Astrocyte of the cerebellum (primary cell): ENCODE measurements at regions of chr9 and their contacts with region 1.

Region 1: DNA sequence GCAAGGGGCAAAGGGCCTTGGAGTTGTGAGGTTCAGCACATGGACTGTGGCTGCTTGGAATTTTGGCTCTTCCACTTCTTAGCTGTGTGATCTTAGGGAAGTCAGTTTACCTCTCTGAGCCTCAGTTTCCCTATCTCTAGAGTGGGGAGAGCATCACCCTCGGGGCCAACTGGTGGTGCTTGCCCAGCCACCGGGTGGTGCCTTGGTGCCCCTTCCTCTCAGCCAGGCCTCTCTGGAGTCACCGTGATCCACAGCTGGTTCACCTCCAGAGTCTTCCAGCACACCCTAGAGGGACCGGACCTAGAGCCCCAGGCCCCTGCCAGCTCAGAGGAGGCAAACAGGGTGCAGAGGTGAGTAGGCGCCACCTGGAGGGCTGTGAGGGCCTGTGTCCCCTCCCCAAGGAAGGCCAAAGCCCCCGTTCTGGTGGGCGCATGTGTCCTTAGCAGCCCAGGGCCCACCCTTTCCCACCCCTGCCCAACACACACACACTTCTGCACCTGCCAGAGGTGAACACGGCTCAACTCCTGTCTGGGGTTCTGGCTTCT is 7.7 kb downstream of the ADGRD2 start:
- DNase-seq: no peak
- H3K4me3 ChIP-seq: no peak overlapping the region
- CTCF ChIP-seq: no peak

Region 2: DNA sequence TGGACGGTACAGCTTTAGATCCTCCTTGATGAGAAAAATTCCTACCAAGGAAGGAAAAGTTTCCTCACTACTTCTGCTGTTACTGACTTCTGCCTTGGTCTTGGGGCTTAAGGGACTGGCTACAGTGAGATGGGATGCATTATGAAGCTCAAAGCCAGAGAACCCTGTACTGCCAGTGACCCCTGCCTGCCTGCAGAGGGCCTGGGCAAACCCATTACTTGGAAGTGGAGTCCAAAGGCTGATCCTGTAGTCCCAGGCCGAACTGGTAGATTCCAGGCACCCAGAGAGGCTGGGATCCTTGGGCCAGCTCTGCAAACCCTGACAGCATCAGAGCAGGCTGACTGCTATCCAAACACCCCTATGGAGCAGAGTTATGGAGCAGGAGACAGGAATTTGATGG is 74.9 kb after region 1 on chr9:
- in situ Hi-C with region 1: loop called (anchors 5 kb)
- DNase-seq: no peak
- H3K4me3 ChIP-seq: no peak overlapping the region
- CTCF ChIP-seq: peak; percentile 5

Region 3: GRCh38 chr9:125227761-125228160 is 769.8 kb after region 1 on chr9:
- in situ Hi-C with region 1: no loop called
- DNase-seq: no peak
- H3K4me3 ChIP-seq: no peak overlapping the region
- CTCF ChIP-seq: no peak